CD4-positive, alpha-beta memory T cell (primary cell): ENCODE measurements at regions of chr19 and their contacts with region 1.

Region 1: DNA sequence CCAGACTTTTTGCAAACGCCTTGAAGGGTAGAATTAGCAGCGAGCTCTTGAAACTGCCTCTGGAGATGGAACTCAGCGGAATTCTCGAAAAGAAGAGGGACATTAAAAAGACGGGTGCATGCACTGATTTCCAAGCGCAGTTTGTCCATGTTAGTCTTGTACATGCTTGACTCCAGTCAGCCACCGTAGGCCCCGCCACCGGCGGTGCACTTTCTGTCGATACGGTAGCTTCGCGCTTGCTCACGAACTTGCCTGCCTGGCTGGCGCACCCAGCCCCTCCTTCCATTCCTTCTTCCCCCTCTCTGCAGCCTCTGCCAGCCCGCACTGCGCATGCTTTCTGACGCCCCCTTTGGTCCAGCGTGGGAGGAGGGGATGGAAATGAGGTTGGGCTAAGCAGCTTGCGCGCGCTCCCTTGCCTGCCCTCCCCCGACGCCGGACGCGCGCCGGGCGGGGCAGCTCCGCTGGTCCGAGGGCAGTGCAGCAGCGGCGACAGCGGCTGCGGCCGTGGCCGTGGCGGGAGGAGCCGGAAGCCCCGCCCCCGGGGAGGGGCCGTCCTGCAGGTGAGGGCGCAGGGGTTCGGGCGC is at the start of gene ZNF575:
- DNase-seq: peak; percentile 82 to 88 (median 84)
- H3K4me3 ChIP-seq: peak within 1 kb of the TSS; percentile 69 to 88
- H3K4me3 Mint-ChIP-seq: peak within 1 kb of the TSS; percentile 91 to 99 (median 98)
- H3K27ac ChIP-seq: peak within 1 kb of the TSS; percentile 53
- H3K27ac Mint-ChIP-seq: peak within 1 kb of the TSS; percentile 95 to 99 (median 98)
- H3K4me1 ChIP-seq: peaks cover 17% of the 10 kb centered on the region
- H3K4me1 Mint-ChIP-seq: peaks cover 10 to 22% (median 15%) of the 10 kb centered on the region in 4 donors
- H3K27me3 ChIP-seq: no peaks in the 10 kb centered on the region
- H3K27me3 Mint-ChIP-seq: no peaks in the 10 kb centered on the region
- total RNA-seq, gene ZNF575: 11.0 to 11.8 TPM

Region 2: DNA sequence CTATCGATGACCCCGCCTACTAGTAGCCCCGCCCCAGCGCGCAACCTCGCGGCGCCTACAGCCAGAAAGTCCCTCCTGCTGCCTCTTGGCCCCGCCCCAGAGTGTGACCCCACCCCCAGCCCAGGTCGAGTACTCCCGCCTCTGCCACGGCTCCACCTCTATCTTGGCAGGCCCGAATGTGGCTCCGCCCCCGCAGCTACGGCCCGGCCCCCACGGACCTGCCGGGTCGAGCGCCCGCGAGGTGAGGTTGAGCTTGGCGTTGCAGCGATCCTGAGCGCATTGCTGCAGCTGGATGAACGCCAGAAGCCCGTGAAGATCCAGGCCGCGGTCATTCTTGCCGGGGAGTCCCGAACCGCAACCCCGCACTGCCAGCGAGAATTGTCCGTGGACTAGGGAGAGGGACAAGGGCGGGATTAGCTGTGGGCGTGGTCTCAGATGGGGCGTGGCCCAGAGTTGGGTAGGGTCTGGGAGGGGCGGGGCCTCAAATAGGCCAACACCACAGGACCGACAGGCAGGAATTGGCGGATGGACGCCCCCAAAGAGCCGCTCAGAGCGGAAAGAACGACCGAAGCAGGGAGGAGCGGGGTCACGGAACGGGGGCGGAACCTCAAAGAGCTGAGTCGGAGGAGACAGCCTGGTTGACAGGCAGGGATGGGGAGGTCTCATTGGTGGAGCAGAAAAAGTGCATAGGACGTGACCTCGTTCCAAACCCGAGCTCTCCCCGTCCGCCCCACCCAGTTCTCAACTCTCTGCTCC is 69.5 kb before region 1 on chr19:
- CTCF ChIA-PET with region 1: interaction called, 3 read pairs
- POLR2A ChIA-PET with region 1: interaction called, 33 read pairs
- intact Hi-C with region 1: no loop called
- DNase-seq: peak; percentile 98 to 100 (median 98)
- H3K4me3 ChIP-seq: peak overlapping the region; percentile 79 to 98
- H3K4me3 Mint-ChIP-seq: peak overlapping the region; percentile 90 to 98 (median 94)
- H3K27ac ChIP-seq: peak overlapping the region; percentile 80
- H3K27ac Mint-ChIP-seq: peak overlapping the region; percentile 95 to 100 (median 99)
- H3K4me1 ChIP-seq: peaks cover 34% of the 10 kb centered on the region
- H3K4me1 Mint-ChIP-seq: peaks cover 25 to 64% (median 43%) of the 10 kb centered on the region in 4 donors
- H3K27me3 ChIP-seq: no peaks in the 10 kb centered on the region
- H3K27me3 Mint-ChIP-seq: no peaks in the 10 kb centered on the region

Region 3: DNA sequence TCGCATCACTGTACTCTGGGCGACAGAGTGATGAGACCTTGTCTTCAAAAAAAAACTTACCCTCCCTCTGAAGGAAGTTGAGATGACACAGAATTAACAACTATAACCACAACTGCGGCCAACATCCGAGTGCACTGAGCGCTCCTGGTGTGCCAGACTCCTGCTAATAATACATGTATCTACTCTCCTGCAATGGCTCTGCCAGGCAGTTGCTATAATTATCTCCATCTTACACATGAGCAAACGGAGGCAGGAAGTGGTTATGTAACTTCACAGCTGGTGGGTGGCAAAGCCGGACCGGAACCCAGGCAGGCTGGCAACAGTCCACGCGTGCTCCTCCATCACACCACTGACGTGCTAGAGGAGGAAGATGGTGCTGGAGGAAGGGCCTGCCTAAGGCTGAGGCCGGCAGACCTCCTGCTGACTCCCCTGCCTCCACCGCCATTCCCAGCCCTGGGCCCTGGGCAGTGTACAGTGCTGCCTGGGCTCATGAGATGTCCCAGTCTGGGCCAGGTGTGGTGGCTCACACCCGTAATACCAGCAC is 29.7 kb after region 1 on chr19:
- CTCF ChIA-PET with region 1: interaction called, 64 read pairs
- POLR2A ChIA-PET with region 1: interaction called, 8 read pairs
- intact Hi-C with region 1: loop called (anchors 2 kb)
- DNase-seq: peak; percentile 82 to 93 (median 86)
- H3K4me3 ChIP-seq: peak overlapping the region in 1 of 2 donors; percentile 32
- H3K4me3 Mint-ChIP-seq: peak overlapping the region; percentile 63 to 86 (median 74)
- H3K27ac ChIP-seq: peak overlapping the region; percentile 72
- H3K27ac Mint-ChIP-seq: peak overlapping the region; percentile 92 to 98 (median 96)
- H3K4me1 ChIP-seq: peaks cover 45% of the 10 kb centered on the region
- H3K4me1 Mint-ChIP-seq: peaks cover 36 to 65% (median 43%) of the 10 kb centered on the region in 4 donors
- H3K27me3 ChIP-seq: no peaks in the 10 kb centered on the region
- H3K27me3 Mint-ChIP-seq: no peaks in the 10 kb centered on the region

Region 4: DNA sequence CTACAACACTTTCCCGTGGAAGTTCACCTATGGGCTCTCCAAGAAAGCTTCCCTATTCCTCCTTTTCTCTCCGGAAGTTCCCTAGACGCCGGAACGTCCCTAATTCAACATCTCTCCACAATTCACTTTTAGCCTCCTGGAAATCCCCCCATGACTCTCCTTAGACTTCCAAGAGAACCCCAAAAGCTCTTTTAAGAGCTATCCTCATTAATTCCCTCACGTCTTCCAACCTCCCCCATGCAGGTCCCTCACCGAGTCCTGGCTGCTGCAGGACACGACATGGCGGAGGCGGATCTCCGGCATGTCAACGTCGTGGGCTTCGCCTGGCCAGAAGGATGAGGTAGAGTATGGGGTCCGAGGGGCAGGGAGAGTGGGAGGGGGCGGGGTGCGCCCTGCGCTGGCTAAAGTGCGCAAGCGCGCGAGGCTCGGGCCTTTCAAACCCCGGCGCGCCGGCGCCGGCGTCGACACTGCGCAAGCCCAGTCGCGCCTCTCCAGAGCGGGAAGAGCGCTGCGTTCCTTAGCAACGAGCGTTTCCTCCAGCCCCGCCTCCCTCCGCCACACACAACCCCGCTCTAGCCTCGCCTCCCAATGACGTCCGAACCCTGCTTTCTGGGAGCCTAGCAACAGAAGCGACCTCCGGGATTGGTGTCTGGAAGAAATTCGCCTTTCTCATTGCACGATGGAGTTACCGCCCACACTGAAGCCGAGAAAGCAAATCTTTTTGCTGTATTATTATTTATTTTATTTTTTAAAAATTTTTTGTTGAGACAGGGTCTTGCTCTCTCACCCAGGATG is 42.3 kb after region 1 on chr19 and contains the starts of genes PINLYP and XRCC1:
- CTCF ChIA-PET with region 1: interaction called, 6 read pairs
- POLR2A ChIA-PET with region 1: interaction called, 15 read pairs
- intact Hi-C with region 1: loop called (anchors 5 kb)
- DNase-seq: peak; percentile 95 to 99 (median 98)
- H3K4me3 ChIP-seq: peak within 1 kb of the TSS; percentile 79 to 100
- H3K4me3 Mint-ChIP-seq: peak within 1 kb of the TSS; percentile 93 to 99 (median 96)
- H3K27ac ChIP-seq: peak within 1 kb of the TSS; percentile 99
- H3K27ac Mint-ChIP-seq: peak within 1 kb of the TSS; percentile 98 to 99 (median 99)
- H3K4me1 ChIP-seq: peaks cover 23% of the 10 kb centered on the region
- H3K4me1 Mint-ChIP-seq: peaks cover 15 to 74% (median 38%) of the 10 kb centered on the region in 4 donors
- H3K27me3 ChIP-seq: no peaks in the 10 kb centered on the region
- H3K27me3 Mint-ChIP-seq: peaks cover 0 to 2% of the 10 kb centered on the region in 2 donors
- total RNA-seq, gene PINLYP: 0.33 to 0.84 TPM
- total RNA-seq, gene XRCC1: 33.4 to 41.0 TPM